Adrenal gland (tissue), 19 donors: ENCODE measurements at regions of chr2 and their contacts with region 1.

Region 1: DNA sequence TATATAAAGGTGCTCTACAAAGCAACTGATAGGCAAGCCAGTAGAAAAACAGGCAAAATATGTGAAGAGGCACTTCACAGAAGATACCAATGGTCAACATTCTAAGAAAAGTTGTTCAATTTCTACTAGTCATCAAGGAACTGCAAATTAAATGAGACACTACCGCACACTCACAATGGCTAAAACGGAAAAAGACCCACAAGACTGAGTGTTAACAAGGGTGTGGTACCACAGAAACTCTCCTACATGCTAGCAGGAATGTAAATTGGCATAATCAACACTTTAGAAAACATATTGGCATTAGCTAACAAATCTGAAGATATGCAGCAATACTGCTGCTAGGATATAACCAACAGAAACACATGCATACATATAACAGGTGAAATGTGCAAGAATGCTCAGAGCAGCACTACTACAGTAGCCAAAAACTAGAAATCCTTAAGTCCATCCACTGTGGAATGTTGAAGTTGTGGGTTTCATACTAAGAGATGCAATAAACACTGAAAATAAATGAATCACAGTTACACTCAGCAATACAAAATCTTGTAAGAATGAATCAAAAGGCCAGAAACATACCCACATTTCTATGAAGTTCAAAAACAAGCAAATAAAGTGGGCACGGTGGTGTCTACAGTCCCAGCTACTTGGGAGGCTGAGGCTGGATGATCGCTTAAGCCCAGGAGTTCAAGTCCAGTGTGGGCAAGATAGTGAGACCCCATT is 9.2 kb downstream of the RNU4ATAC start:
- DNase-seq: no peak
- H3K4me3 ChIP-seq: peak overlapping the region in 1 of 4 donors; percentile 18
- H3K27ac ChIP-seq: peak overlapping the region in 1 of 5 donors; percentile 32
- H3K4me1 ChIP-seq: peaks cover 10 to 65% of the 10 kb centered on the region in 2 donors
- H3K27me3 ChIP-seq: no peaks in the 10 kb centered on the region
- CTCF ChIP-seq: no peak
- POLR2A ChIP-seq: no peak

Region 2: GRCh38 chr2:121591199-121591598 is 51.3 kb after region 1 on chr2:
- intact Hi-C with region 1: loop called in 1 of 2 experiments (anchors 5 kb)
- DNase-seq: no peak
- H3K4me3 ChIP-seq: no peak overlapping the region
- H3K27ac ChIP-seq: no peak overlapping the region
- H3K4me1 ChIP-seq: peaks cover 5 to 14% of the 10 kb centered on the region in 2 donors
- H3K27me3 ChIP-seq: no peaks in the 10 kb centered on the region
- CTCF ChIP-seq: no peak
- POLR2A ChIP-seq: no peak